Ovary (tissue), 10 donors: ENCODE measurements at regions of chr2 and their contacts with region 1.

Region 1: GRCh38 chr2:96679848-96680247 is 37.3 kb downstream of the FER1L5 start:
- DNase-seq: peak in 1 of 5 donors; percentile 20
- H3K4me3 ChIP-seq: no peak overlapping the region
- H3K27ac ChIP-seq: no peak overlapping the region
- H3K4me1 ChIP-seq: peaks cover 5% of the 10 kb centered on the region
- H3K27me3 ChIP-seq: no peaks in the 10 kb centered on the region
- CTCF ChIP-seq: no peak
- EP300 ChIP-seq: no peak
- POLR2A ChIP-seq: no peak

Region 2: DNA sequence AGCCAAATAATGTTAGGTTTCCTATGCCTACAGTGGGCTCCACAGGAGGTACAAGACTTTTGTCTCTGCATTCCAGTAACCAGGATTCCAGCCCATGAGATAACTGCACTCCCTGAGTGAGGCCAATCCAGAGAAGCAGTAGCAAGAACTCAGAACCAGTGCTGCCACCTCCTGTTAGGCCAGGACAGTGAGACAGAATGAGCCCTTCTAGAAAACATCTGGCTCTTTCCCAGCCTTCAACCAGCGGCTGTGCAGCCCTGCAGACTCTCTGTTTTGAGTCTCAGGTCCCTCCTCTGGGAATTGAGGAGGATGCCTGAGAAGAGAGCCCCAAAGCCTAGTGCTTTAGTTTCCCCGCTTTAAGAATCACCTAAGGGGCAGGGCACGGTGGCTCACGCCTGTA is 99.1 kb before region 1 on chr2:
- intact Hi-C with region 1: no loop called
- DNase-seq: no peak
- H3K4me3 ChIP-seq: no peak overlapping the region
- H3K27ac ChIP-seq: no peak overlapping the region
- H3K4me1 ChIP-seq: no peaks in the 10 kb centered on the region
- H3K27me3 ChIP-seq: no peaks in the 10 kb centered on the region
- CTCF ChIP-seq: no peak
- EP300 ChIP-seq: no peak
- POLR2A ChIP-seq: no peak

Region 3: DNA sequence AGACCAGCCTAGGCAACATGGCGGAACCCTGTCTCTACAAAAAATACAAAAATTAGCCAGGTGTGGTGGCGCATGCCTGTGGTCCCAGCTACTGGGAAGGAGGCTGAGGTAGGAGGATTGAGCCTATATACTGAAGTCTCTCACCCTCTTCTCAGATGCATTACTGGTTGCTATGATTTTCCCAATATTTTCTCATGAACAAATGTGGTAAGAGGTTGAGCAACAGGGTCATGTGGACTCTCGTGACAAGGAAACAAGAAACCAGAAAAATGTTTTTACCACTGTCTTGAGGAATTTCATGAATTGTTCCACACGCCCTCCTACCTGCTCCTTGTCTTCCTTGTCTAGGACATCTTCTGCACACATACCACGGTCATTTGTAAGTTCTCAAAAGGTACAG is 47.6 kb after region 1 on chr2:
- intact Hi-C with region 1: loop called in 1 of 4 experiments (anchors 10 kb)
- DNase-seq: no peak
- H3K4me3 ChIP-seq: no peak overlapping the region
- H3K27ac ChIP-seq: no peak overlapping the region
- H3K4me1 ChIP-seq: no peaks in the 10 kb centered on the region
- H3K27me3 ChIP-seq: no peaks in the 10 kb centered on the region
- CTCF ChIP-seq: no peak
- EP300 ChIP-seq: no peak
- POLR2A ChIP-seq: no peak